A673 (cell line): ENCODE measurements at regions of chr14 and their contacts with region 1.

Region 1: GRCh38 chr14:22766456-22767322 is at the start of gene OXA1L:
- DNase-seq: peak; percentile 98
- H3K4me3 ChIP-seq: peak within 1 kb of the TSS; percentile 71
- H3K27ac ChIP-seq: peak within 1 kb of the TSS; percentile 84
- H3K4me1 ChIP-seq: peaks cover 12% of the 10 kb centered on the region
- H3K27me3 ChIP-seq: no peaks in the 10 kb centered on the region
- CTCF ChIP-seq: no peak
- total RNA-seq, gene OXA1L: 103 and 107 TPM in 2 replicates

Region 2: GRCh38 chr14:22699801-22700564 is 66.7 kb before region 1 on chr14:
- CTCF ChIA-PET with region 1: no interaction called
- POLR2A ChIA-PET with region 1: no interaction called
- intact Hi-C with region 1: no loop called
- DNase-seq: no peak
- H3K4me3 ChIP-seq: no peak overlapping the region
- H3K27ac ChIP-seq: no peak overlapping the region
- H3K4me1 ChIP-seq: no peaks in the 10 kb centered on the region
- H3K27me3 ChIP-seq: peaks cover 35% of the 10 kb centered on the region
- CTCF ChIP-seq: no peak

Region 3: DNA sequence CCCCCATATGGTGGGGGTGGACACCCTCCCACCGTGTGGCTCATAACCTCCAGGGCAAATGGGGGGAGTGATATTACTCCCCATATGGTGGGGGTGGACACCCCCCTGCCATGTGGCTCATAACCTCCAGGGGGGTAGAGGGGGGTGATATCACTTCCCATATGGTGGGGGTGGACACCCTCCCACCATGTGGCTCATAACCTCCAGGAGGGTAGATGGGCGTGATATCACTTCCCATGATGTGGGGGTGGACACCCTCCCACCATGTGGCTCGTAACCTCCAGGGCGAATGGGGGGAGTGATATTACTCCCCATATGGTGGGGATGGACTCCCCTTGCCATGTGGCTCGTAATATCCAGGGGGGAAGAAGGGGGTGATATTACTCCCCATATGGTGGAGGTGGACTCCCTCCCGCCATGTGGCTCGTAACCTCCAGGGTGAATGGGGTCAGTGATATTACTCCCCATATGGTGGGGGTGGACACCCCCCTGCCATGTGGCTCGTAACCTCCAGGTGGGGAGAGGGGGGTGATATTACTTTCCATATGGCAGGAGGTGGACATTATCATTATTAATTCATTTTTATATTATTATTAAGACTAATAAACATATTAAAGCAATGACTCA is 51.4 kb before region 1 on chr14:
- CTCF ChIA-PET with region 1: interaction called, 12 read pairs
- POLR2A ChIA-PET with region 1: no interaction called
- intact Hi-C with region 1: no loop called
- DNase-seq: no peak
- H3K4me3 ChIP-seq: no peak overlapping the region
- H3K27ac ChIP-seq: no peak overlapping the region
- H3K4me1 ChIP-seq: peaks cover 5% of the 10 kb centered on the region
- H3K27me3 ChIP-seq: peaks cover 16% of the 10 kb centered on the region
- CTCF ChIP-seq: no peak